Posterior vena cava (tissue), 2 donors: ENCODE measurements at regions of chr1 and their contacts with region 1.

Region 1: GRCh38 chr1:79113836-79114235 is 107.3 kb upstream of the ADGRL4 start:
- DNase-seq: no peak

Region 2: DNA sequence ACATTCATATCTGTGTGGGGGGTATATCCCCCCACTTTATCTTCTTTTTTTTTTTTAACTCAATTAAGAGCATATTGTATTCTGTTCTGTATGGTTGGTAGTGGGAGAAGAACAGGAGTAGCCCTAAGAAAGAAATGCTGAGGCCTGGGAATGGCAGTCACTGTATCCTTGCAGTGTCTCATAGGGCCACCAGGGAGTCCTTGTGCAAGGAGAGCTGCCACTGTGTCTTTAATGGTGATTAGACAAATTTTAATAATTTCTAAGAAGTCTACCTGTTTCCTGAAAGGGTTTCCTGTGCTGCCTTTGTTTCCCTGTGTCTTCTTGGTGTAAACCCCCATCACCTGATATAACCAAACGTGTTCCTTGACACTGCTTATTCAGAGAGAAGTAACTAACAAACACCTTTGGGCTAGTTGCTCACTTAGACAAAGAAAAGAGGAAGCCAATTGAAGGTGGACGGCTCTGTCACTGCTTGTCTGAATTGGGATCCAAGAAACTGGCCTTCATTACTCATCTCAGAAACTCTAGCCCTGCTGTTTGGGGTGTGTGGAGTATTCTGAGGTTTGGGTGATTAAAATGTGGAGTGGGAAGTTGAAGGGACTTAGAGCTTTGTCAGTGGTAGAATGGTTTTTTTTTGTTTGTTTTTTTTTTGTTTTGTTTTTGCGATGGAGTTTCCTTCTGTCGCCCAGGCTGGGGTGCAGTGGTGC is 1052.8 kb before region 1 on chr1:
- intact Hi-C with region 1: loop called in 1 of 2 experiments (anchors 10 kb)
- DNase-seq: no peak